HEK293T (cell line): ENCODE measurements at regions of chr4 and their contacts with region 1.

Region 1: GRCh38 chr4:33160126-33160525 is 2440.0 kb downstream of the PCDH7 start:
- DNase-seq: peak; percentile 3

Region 2: GRCh38 chr4:33226133-33226532 is 66.0 kb after region 1 on chr4:
- CTCF ChIA-PET with region 1: interaction called, 11 read pairs
- POLR2A ChIA-PET with region 1: no interaction called
- DNase-seq: no peak